Activated CD8-positive, alpha-beta memory T cell treated with anti-CD3 and anti-CD28 coated beads, Interleukin-2, amount 10 ng/mL, durations not matched to agents 7 days and 5 days (primary cell): ENCODE measurements at regions of chr11 and their contacts with region 1.

Region 1: GRCh38 chr11:126268708-126269579 is at the starts of genes FOXRED1 and SRPRA:
- DNase-seq: peak; percentile 100
- ATAC-seq: peak; percentile 99
- H3K4me3 Mint-ChIP-seq: peak within 1 kb of the TSS; percentile 83
- H3K27ac Mint-ChIP-seq: peak within 1 kb of the TSS; percentile 88
- H3K4me1 Mint-ChIP-seq: peaks cover 40% of the 10 kb centered on the region
- H3K27me3 Mint-ChIP-seq: no peaks in the 10 kb centered on the region
- total RNA-seq, gene FOXRED1: 44.7 to 46.8 TPM
- total RNA-seq, gene SRPRA: 100 to 134 TPM

Region 2: GRCh38 chr11:126211235-126212088 is 57.5 kb before region 1 on chr11 and contains the starts of genes FAM118B and RPUSD4:
- CTCF ChIA-PET with region 1: no interaction called
- DNase-seq: peak; percentile 99
- ATAC-seq: peak; percentile 98
- H3K4me3 Mint-ChIP-seq: peak within 1 kb of the TSS; percentile 92
- H3K27ac Mint-ChIP-seq: peak within 1 kb of the TSS; percentile 88
- H3K4me1 Mint-ChIP-seq: peaks cover 42% of the 10 kb centered on the region
- H3K27me3 Mint-ChIP-seq: peaks cover 5% of the 10 kb centered on the region
- total RNA-seq, gene FAM118B: 9.9 to 14.7 TPM
- total RNA-seq, gene RPUSD4: 32.0 to 38.8 TPM

Region 3: GRCh38 chr11:126282736-126283591 is 14.0 kb after region 1 on chr11 and contains the start of gene TIRAP:
- CTCF ChIA-PET with region 1: interaction called, 10 read pairs
- DNase-seq: peak; percentile 77
- ATAC-seq: peak; percentile 85
- H3K4me3 Mint-ChIP-seq: peak within 1 kb of the TSS; percentile 98
- H3K27ac Mint-ChIP-seq: peak within 1 kb of the TSS; percentile 98
- H3K4me1 Mint-ChIP-seq: peaks cover 41% of the 10 kb centered on the region
- H3K27me3 Mint-ChIP-seq: no peaks in the 10 kb centered on the region
- total RNA-seq, gene TIRAP: 14.3 to 14.8 TPM